HEK293T (cell line): ENCODE measurements at regions of chr3 and their contacts with region 1.

Region 1: DNA sequence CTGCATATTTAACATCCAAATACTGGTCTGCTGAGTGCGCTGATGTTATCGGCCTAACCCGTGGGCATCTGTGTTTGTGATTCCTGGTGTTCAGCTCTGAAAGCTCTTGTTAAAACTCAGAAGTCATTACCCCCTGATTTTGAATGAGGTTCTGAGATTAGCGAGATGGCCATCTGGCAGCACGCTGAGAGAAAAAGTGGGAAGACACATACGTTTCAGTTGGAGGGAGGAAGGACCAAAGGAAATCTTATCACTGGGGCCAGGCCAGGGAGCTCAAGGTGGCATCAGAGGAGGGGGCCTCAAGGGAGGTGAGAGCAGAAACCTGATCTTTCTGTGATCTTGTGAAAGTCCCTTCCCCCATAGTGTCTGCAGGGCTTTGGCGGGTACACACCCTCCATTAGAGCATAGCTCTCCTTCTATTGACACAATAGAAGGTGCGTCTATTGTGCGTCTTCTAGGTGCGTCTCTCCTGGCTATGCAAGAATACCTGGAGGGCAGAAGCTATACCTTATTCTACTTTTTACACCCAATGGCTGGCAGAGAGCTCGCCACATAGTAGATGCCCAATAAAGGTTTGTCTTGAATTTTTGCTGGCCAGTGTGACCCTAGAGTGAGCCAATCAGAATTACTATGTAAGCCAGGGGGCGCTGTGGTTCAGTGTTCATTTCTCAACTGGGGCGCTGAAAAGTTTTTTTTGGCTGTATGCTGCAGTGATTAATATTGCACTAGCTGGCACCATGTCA is 182.4 kb downstream of the SHQ1 start:
- DNase-seq: peak; percentile 52

Region 2: GRCh38 chr3:72655723-72656122 is 10.1 kb before region 1 on chr3:
- CTCF ChIA-PET with region 1: interaction called, 10 read pairs
- POLR2A ChIA-PET with region 1: no interaction called
- DNase-seq: peak; percentile 31

Region 3: GRCh38 chr3:72821161-72821781 is 155.4 kb after region 1 on chr3:
- CTCF ChIA-PET with region 1: interaction called, 17 read pairs
- POLR2A ChIA-PET with region 1: no interaction called
- DNase-seq: no peak